ENCODE measurements at regions of chr1 and their contacts with region 1.

Region 1: DNA sequence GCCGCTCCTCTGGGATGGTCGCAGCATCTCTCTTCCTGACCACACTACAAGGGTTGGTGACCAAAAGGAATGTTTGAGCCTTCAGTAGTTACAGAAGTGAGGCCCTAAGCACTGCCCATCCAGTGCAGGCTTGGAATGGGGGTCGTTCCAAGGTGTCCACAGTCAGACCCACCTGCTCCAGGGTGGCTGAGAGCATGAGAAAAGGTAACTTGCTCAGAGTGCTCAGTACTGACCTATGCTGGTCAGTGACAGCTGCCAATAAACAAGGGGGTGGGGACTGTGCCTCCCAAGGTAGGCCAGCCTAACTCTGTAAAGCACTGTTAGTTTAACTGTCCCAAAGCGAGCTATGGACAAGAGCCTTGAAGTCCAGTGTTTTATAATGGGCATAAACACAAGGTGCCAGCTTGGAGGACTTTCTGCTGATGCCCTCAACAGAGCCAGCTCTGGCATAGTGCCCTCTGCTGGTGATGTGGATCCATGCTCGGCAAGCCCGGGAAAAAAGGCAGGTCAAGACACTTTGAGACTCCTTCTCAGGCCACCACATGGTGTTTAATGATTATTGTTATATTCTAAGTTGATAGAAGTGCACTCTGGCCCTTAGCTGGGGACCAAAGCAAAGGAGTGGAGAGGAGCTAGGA is 78.1 kb upstream of the DNAH14 start:
- DNase-seq: peak; percentile 63
- H3K4me3 Mint-ChIP-seq: no peak overlapping the region
- H3K27ac Mint-ChIP-seq: no peak overlapping the region
- H3K4me1 Mint-ChIP-seq: no peaks in the 10 kb centered on the region
- H3K27me3 Mint-ChIP-seq: peaks cover 8% of the 10 kb centered on the region

Region 2: DNA sequence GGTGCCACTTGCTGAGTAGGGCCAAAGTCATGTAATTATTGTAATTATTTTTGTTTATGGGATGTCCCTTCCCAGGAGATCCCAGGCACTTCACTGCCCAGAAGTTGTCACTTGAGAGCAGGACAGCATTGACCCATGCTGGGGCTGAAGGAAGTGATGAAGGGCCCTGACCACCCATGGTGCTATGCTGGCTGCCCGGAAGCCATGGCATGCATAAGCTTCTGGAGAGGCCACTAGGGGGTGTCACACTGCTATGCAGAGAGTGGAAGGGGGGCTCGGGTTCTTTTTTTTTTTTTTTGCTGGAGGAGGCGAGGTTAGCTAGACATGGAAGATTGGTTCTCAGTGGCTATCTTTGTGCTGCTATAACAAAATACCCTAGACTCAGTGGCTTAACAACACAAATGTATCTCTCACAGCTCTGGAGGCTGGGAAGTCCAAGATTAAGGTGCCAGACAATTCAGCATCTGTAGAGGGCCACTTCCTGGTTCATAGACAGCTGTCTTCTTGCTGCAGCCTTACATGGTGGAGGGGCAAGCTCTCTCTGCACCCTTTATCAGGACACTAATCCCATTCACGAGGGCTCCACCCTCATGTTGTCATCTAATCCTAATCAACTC is 150.3 kb before region 1 on chr1:
- CTCF ChIA-PET with region 1: interaction called, 13 read pairs
- POLR2A ChIA-PET with region 1: no interaction called
- DNase-seq: no peak
- H3K4me3 Mint-ChIP-seq: no peak overlapping the region
- H3K27ac Mint-ChIP-seq: no peak overlapping the region
- H3K4me1 Mint-ChIP-seq: no peaks in the 10 kb centered on the region
- H3K27me3 Mint-ChIP-seq: peaks cover 4% of the 10 kb centered on the region

Region 3: DNA sequence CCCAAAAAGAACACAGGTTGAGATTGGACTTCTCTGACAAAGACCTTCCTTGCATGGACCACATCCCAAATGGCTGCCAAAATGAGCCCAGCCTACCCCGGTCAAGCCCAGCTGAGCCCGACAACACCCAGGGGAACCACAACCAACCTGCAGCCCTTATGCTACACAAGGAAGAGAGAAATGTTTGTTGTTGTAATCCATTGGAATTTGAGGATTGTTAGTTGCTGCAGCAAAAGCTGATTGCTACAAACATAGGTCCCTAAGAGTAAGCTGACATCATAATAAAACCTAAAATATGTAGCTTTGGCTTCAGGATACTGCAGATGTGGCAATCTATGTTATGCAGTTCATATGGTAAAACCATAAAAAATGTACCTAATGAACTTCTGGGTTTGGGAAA is 12.6 kb after region 1 on chr1:
- CTCF ChIA-PET with region 1: interaction called, 12 read pairs
- POLR2A ChIA-PET with region 1: no interaction called
- DNase-seq: no peak
- H3K4me3 Mint-ChIP-seq: no peak overlapping the region
- H3K27ac Mint-ChIP-seq: no peak overlapping the region
- H3K4me1 Mint-ChIP-seq: no peaks in the 10 kb centered on the region
- H3K27me3 Mint-ChIP-seq: peaks cover 2% of the 10 kb centered on the region